ENCODE measurements at regions of chr20 and their contacts with region 1.

Region 1: GRCh38 chr20:40990542-40991120 is 38.0 kb upstream of the TOP1 start:
- DNase-seq: no peak
- H3K4me3 ChIP-seq: no peak overlapping the region
- H3K27me3 ChIP-seq: no peaks in the 10 kb centered on the region
- CTCF ChIP-seq: peak; percentile 92

Region 2: GRCh38 chr20:40938020-40938419 is 52.6 kb before region 1 on chr20:
- CTCF ChIA-PET with region 1: no interaction called
- POLR2A ChIA-PET with region 1: no interaction called
- DNase-seq: no peak
- H3K4me3 ChIP-seq: no peak overlapping the region
- H3K27me3 ChIP-seq: peaks cover 1% of the 10 kb centered on the region; the same call in 1 of the 2 replicates
- CTCF ChIP-seq: no peak

Region 3: DNA sequence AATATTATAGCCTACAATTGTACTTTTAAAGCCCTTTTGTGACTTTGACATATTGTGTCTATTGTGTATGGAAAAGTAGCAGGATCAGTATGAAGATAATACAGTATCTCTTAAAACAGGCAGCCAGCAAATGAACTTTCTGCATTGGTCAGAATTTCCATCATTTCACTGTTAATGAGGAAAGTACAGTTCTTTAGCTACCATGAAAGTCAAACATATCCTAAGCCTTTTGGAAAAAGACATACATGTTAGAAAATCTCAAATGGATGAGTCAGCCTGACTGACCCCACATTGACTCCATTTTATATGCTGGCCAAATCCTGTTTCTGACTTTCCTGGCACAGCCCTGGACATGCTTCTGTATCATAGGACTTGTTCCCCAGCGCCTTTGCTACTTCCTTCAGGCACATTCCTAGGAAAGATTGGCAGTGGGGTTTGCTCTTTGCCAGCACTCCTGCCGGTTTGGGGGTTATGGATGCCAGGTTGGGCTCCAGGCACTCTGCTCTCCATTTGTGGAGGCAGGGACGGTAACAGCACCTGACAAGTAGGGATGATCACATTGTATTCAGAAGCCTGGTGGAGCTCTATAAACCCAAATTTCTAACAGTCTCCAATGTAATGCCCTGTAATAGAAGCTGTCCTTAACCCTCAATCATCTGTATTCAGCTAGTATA is 81.7 kb after region 1 on chr20:
- CTCF ChIA-PET with region 1: interaction called, 24 read pairs
- POLR2A ChIA-PET with region 1: no interaction called
- DNase-seq: peak; percentile 67
- H3K4me3 ChIP-seq: no peak overlapping the region
- H3K27me3 ChIP-seq: no peaks in the 10 kb centered on the region
- CTCF ChIP-seq: no peak

Region 4: GRCh38 chr20:41078329-41078728 is 87.7 kb after region 1 on chr20:
- CTCF ChIA-PET with region 1: interaction called, 24 read pairs
- POLR2A ChIA-PET with region 1: interaction called, 3 read pairs
- DNase-seq: peak; percentile 36
- H3K4me3 ChIP-seq: no peak overlapping the region
- H3K27me3 ChIP-seq: no peaks in the 10 kb centered on the region
- CTCF ChIP-seq: peak; percentile 68

Measured in BJ (cell line).